Caco-2 (cell line): ENCODE measurements at regions of chr19 and their contacts with region 1.

Region 1: DNA sequence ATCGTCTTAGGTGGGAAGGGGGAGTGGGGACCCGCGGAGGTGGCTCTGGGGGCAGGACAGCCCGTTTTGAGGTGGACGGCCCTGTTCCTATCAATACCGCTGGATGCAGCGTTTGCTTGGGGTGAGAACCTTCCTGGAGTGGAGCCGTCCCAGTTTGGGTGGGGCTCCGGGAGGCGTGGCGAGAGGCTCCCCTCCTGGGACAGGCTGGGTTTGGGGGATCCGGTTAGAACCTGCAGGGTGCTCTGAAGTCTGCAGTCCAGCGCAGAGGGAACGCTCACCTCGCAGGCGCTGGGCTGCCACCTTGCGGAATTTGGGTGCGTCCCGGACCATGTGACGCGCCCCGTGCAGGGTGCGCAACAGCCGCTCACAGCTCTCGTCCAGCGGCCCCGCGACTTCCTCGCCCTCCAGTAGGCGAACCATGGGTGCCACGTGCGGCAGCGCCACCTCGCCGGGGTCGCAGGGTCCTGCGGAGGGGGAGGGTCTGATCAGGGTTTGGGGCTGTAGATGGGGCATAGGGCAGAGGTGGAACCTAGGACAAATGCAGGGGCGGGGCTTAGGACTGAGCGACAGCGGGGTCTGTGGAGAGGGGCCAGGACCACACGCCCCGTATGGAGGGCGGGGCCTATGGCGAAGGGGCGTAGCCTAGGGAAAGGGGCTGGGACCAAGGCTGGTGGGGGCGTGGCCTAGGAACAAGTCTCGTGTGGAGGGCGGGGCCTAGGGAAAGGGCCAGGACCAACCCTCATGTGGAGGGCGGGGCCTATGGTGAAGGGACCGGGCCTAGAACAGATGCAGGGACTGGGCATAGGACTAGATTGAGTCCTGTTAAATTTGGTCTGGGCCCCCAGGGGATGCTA is 13.8 kb downstream of the SH2D3A start:
- DNase-seq: peak; percentile 97
- H3K4me3 ChIP-seq: peak overlapping the region; percentile 53
- H3K4me3 Mint-ChIP-seq: peak overlapping the region; percentile 94
- H3K27ac Mint-ChIP-seq: peak overlapping the region; percentile 98
- H3K4me1 ChIP-seq: peaks cover 18% of the 10 kb centered on the region; the same call in 1 of the 2 replicates
- H3K4me1 Mint-ChIP-seq: peaks cover 6% of the 10 kb centered on the region
- H3K27me3 ChIP-seq: no peaks in the 10 kb centered on the region
- H3K27me3 Mint-ChIP-seq: no peaks in the 10 kb centered on the region
- CTCF ChIP-seq: peak; percentile 40 to 45

Region 2: GRCh38 chr19:6767357-6768235 is 14.2 kb after region 1 on chr19 and contains the start of gene SH2D3A:
- CTCF ChIA-PET with region 1: interaction called, 3 read pairs
- POLR2A ChIA-PET with region 1: interaction called, 13 read pairs
- intact Hi-C with region 1: loop called (anchors 1 kb)
- DNase-seq: peak; percentile 95 to 96
- H3K4me3 ChIP-seq: peak within 1 kb of the TSS; percentile 80
- H3K4me3 Mint-ChIP-seq: peak within 1 kb of the TSS; percentile 80
- H3K27ac Mint-ChIP-seq: peak within 1 kb of the TSS; percentile 94
- H3K4me1 ChIP-seq: peaks cover 13% of the 10 kb centered on the region
- H3K4me1 Mint-ChIP-seq: peaks cover 10% of the 10 kb centered on the region
- H3K27me3 ChIP-seq: no peaks in the 10 kb centered on the region
- H3K27me3 Mint-ChIP-seq: no peaks in the 10 kb centered on the region
- CTCF ChIP-seq: no peak
- total RNA-seq, gene SH2D3A: 20.5 and 24.5 TPM in 2 replicates

Region 3: DNA sequence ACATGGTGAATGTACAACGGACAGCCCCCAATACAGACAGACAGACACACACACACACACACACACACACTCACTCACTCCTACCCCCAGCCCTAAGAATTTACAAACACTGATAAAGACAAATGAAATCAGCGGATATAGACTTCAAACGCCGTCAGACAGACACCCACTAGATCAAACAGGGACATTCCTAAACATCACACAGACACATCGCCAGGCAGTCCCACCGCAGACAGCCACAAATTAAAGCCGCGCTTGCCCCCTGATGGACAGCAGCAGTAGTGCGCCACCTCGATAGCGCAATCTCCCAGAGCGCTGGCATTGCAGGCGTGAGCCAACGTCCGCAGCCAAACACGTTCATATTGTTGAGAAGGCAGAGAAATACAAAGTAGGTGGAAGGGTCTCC is 109.3 kb after region 1 on chr19:
- CTCF ChIA-PET with region 1: interaction called, 8 read pairs
- POLR2A ChIA-PET with region 1: no interaction called
- intact Hi-C with region 1: loop called (anchors 1 kb)
- DNase-seq: peak; percentile 85 to 87
- H3K4me3 ChIP-seq: peak overlapping the region; percentile 24
- H3K4me3 Mint-ChIP-seq: peak overlapping the region; percentile 65
- H3K27ac Mint-ChIP-seq: no peak overlapping the region
- H3K4me1 ChIP-seq: no peaks in the 10 kb centered on the region
- H3K4me1 Mint-ChIP-seq: peaks cover 6% of the 10 kb centered on the region
- H3K27me3 ChIP-seq: no peaks in the 10 kb centered on the region
- H3K27me3 Mint-ChIP-seq: peaks cover 3% of the 10 kb centered on the region
- CTCF ChIP-seq: peak; percentile 82 to 88